HEK293T (cell line): ENCODE measurements at regions of chr11 and their contacts with region 1.

Region 1: GRCh38 chr11:65261591-65262380 is at the start of gene POLA2:
- DNase-seq: peak; percentile 100

Region 2: GRCh38 chr11:65083834-65084597 is 177.8 kb before region 1 on chr11 and contains the starts of genes CDCA5 and ZFPL1:
- CTCF ChIA-PET with region 1: no interaction called
- POLR2A ChIA-PET with region 1: no interaction called
- DNase-seq: peak; percentile 99

Region 3: DNA sequence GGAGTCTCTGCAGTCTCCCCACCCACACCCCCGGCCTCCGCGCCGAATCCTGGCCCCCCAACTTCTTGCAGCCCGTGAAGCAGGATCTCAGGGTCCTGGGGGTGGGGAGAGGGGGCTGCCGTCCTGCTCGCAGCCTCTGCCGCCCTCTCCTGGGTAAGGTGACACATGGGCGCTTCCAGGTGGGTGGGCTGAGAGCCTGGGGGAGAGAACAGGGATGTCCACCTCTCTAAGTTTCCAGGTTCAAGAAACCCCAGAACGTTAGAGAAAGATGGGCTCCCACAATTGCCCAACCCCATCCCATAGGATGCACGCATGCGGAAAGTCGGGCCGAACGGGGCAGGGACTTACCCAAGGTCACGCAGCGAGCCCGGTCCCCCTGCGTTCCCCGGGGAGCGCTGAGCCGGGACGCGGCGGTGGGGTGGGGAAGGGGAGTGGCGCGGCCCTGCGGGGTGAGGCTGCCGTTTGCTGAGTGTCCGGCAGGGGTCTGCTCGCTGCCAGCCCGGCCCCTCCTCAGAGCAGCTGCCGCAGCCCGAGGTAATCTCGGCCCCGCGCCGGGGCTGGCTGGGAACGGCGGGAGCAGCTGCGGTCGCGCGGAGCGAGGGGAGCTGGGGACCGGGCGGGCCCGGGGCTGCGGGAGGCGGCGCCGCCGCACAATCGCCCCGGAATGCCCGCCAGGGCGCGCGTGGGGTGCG is 80.8 kb before region 1 on chr11:
- CTCF ChIA-PET with region 1: no interaction called
- POLR2A ChIA-PET with region 1: interaction called, 14 read pairs
- DNase-seq: peak; percentile 87

Region 4: DNA sequence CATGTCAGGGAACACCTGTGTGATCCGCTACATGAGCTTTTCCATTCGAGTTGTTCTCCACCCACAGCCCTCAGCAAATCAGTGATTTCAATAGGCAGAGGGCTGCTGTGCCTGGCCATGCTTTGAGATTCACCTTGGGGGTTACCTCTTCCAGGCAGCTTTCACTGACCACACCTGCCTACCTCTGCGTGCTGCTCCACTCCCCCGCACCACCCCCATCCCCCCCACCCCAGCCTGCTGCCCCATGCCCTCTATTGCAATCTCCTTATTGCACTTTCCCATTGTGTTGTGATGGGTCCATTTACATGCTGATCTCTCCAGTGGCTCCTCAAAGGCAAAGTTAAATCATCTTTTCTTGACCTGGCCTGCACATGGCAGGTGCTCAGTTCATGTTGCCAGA is 18.0 kb before region 1 on chr11:
- CTCF ChIA-PET with region 1: no interaction called
- POLR2A ChIA-PET with region 1: interaction called, 10 read pairs
- DNase-seq: no peak

Region 5: DNA sequence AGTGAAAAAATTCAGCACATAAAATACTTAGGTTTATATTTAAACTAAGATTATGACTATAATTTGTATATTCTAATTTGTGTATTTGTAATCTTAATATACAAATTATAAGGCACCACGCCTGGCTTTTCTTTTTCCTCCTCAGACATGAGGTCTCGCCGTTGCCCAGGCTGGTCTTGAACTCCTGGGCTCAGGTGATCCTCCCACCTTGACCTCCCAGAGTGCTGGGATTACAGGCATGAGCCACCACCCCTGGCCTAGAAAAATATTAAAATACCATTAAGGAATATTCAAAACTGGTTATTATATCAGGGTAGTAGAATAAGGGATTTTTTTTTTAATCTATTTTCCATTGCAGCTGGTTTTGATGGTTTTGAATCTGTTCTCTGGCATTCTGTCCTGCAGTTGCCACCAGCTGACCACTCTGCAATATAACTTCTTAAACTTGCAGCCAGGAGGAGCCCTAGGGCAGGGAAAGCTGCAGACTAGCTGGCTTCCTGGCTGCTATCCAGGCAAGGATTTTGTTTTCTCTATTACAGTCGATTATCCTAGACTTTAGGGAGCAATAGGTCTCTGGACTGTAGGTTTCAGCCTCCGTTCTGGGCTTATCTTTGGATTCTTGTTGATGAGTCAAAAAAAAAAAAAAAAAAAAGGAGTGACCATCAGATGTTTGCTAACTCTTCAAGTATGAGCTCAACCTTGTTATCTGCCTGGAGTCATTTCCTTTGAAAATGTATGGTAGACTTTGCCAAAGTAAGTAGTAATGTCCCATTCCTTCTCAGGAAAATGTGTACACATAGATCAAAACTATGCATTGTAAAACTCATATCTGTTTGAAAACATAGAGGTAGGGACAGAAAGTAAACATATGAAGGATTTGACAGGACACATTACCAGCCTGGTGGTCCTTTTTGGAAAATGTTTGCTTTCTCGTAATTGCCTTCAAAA is 13.2 kb after region 1 on chr11:
- CTCF ChIA-PET with region 1: interaction called, 3 read pairs
- POLR2A ChIA-PET with region 1: interaction called, 38 read pairs
- DNase-seq: peak; percentile 68

Region 6: GRCh38 chr11:65329944-65330403 is 68.2 kb after region 1 on chr11:
- CTCF ChIA-PET with region 1: interaction called, 3 read pairs
- POLR2A ChIA-PET with region 1: interaction called, 14 read pairs
- DNase-seq: peak; percentile 69